Activated T-helper 1 cell treated with anti-CD3 and anti-CD28 coated beads, Interleukin-12 subunit alpha, Interleukin-12 subunit beta, Interleukin-2, Interleukin-4 antibody, amounts not matched to agents 30 ng/mL and 10 ng/mL and 1 ng/mL, durations not matched to agents 14 hours and 24 hours and 36 hours (primary cell): ENCODE measurements at regions of chrX and their contacts with region 1.

Region 1: GRCh38 chrX:49002091-49002935 is at the start of gene GRIPAP1:
- DNase-seq: peak; percentile 68
- H3K4me3 Mint-ChIP-seq: peak within 1 kb of the TSS; percentile 99
- H3K27ac Mint-ChIP-seq: peak within 1 kb of the TSS; percentile 96
- H3K4me1 Mint-ChIP-seq: peaks cover 35% of the 10 kb centered on the region
- H3K27me3 Mint-ChIP-seq: no peaks in the 10 kb centered on the region
- total RNA-seq, gene GRIPAP1: 85.8 and 89.2 TPM in 2 replicates

Region 2: DNA sequence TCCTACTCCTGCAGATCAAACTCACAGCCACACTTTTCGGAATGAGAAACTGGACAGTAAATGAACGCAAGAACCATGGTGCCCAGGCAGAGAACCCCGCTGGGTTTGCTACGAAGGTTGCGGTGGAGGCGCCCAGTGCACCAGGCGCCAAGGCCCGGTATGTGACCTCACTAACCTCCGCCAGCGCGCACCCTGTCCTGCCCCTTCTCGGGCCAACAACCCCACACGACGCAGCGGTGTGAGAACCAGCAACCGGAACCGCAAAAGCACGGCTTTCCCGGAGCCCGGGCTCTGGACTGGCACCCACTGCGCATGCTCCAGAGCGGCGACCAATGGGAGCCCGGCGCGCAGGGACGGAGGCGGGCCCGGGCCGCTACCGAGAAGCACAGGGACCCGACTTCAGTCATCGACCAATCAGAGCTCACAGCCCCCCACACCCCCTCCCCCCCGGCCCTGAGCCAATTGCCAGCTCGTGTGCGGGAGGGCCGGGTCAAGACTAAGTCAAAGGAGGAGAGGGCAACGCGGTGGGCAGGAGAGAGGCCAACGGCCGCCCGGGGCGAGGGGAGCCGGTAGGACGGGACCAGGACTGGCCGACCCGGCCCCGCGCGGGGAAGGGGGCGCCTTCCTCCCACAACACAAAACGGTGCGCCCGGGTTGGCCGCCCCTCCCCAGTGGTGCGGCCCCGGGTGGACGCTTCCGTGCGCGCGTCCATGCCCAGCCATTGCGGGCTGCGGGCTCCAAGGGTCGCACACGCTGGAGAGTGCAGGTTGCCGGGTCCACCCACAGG is 326.0 kb before region 1 on chrX:
- intact Hi-C with region 1: no loop called
- DNase-seq: peak; percentile 87
- H3K4me3 Mint-ChIP-seq: peak overlapping the region; percentile 86
- H3K27ac Mint-ChIP-seq: peak overlapping the region; percentile 88
- H3K4me1 Mint-ChIP-seq: peaks cover 20% of the 10 kb centered on the region
- H3K27me3 Mint-ChIP-seq: no peaks in the 10 kb centered on the region

Region 3: DNA sequence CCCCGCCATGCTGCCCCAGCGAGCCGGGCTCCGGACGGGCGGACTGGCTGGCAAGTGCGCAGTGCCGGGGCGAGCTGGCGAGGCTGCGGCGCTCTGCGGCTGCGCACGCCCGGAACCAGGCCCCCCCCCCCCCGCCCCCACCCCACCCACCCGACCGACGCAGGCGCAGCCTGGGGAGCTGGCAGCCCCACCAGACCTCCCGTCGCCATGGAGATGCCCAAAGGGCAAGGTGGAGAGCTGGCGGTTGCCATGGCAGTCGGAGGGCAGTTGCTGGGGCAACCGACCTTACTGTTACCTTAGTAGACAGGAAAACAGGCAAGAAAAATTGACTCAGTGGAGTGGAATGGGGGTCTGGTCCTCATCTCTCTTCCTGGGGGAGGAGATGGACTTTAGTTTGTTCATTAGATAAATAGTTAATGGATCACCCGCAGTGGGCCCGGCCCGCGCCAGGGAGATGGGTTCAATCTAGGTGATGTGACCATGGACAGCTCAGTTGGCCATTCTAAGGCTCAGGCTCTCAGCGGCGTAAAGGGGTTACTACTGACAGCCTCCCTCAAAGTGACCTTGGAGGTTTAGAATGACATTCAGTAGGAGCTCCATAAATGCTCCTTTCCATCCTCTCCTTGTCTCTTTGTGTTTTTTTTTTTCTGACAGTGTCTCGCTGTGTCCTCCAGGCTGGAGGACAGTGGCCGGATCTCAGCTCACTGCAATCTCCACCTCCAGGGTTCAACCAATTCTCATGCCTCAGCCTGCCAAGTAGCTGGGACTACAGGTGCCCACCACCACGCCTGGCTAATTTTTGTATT is 166.6 kb before region 1 on chrX and contains the start of gene PCSK1N:
- intact Hi-C with region 1: no loop called
- DNase-seq: no peak
- H3K4me3 Mint-ChIP-seq: peak within 1 kb of the TSS; percentile 76
- H3K27ac Mint-ChIP-seq: peak within 1 kb of the TSS; percentile 53
- H3K4me1 Mint-ChIP-seq: peaks cover 16% of the 10 kb centered on the region
- H3K27me3 Mint-ChIP-seq: peaks cover 39% of the 10 kb centered on the region
- total RNA-seq, gene PCSK1N: 0.36 and 0.42 TPM in 2 replicates

Region 4: DNA sequence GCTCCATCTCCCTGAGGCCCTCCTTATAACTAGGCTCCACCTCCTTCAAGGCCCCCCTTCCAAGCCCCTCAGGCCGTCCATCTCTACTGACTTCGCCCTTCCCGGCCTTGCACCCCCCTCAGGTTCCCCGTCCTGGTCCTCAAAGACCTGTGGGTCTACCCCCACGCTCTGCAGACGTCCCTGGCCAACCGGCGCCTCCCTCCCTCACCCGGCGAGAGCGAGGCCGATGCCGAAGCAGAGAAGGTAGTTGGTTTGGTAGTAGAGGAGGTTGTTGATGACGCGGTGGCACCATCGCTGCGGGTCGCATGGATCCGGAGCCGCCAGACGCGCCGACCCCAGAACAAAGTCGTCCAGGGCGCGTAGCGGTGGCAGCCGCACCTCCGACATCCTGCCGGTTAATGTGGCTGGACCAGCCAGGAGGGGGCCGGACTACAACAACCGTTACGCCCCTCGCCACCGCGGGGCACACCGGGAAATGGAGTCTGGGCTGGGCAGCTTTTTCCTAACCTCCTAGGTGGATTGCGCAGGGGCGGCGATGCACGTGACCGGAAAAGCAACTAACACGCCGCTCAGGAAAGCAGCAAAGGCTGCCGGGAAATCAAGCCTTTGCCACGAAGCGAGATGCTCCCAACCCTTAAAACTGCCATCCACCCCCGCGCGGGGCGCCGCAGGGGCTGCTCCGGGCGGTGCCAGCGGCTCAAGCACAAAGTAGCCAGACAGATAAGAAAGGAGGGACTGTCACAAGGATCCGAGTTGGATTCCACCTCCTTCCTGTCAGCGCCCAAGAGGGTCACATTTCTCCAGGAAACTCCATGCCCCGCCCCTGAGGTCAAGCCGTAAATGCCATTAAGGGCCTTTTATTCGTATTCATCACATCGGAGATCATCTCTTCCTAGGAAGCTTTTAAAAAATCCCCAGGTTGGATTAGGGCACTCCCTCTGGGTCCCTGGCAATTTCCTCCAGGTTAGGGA is 71.6 kb after region 1 on chrX and contains the start of gene PRAF2:
- intact Hi-C with region 1: loop called (anchors 1 kb)
- DNase-seq: peak; percentile 84
- H3K4me3 Mint-ChIP-seq: peak within 1 kb of the TSS; percentile 84
- H3K27ac Mint-ChIP-seq: peak within 1 kb of the TSS; percentile 74
- H3K4me1 Mint-ChIP-seq: peaks cover 12% of the 10 kb centered on the region
- H3K27me3 Mint-ChIP-seq: no peaks in the 10 kb centered on the region
- total RNA-seq, gene PRAF2: 14.9 and 15.4 TPM in 2 replicates

Region 5: DNA sequence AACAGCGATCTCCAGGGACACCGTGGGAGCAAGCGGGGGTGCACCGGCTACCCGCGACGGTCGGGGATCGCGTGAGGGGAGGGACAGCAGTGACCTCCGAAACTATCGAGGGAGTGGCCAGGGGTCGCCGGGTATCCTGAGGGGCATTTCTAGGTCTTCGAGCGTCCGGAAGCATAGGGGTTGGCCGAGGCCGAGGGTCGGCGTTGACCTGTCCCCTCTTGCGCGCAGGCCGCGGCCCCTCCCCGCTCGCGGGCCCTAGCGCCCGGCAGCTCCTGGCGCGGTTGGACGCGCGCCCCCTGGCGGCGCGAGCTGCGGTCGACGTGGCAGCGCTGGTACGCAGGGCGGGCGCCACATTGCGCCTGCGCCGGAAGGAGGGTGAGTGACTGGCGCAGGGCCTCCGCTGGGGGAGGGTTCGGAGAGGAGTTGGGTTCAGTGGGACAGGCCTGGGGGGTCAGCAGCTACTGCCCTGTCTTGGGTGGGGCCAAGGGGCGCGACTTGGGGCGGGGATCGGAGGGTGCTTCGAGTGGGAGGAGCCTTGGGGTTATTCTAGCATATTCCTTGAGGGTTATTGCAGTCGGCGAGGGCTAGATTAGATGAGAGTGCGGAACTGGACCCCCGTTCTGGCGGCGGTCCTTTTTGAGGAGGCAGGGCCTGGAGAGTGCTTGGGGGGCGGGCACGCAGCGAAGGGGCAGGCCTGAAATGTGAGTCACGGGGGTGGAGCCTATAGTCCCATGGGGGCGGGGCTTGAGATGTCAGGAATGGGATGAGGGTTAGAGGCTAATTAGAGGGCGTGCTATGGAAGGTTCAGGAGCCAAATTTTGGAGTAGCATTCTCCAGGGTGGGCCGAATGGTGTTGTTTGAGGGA is 161.5 kb after region 1 on chrX:
- intact Hi-C with region 1: loop called (anchors 5 kb)
- DNase-seq: peak; percentile 77
- H3K4me3 Mint-ChIP-seq: peak overlapping the region; percentile 69
- H3K27ac Mint-ChIP-seq: peak overlapping the region; percentile 72
- H3K4me1 Mint-ChIP-seq: peaks cover 23% of the 10 kb centered on the region
- H3K27me3 Mint-ChIP-seq: peaks cover 4% of the 10 kb centered on the region